ENCODE measurements at regions of chr14 and their contacts with region 1.

Region 1: DNA sequence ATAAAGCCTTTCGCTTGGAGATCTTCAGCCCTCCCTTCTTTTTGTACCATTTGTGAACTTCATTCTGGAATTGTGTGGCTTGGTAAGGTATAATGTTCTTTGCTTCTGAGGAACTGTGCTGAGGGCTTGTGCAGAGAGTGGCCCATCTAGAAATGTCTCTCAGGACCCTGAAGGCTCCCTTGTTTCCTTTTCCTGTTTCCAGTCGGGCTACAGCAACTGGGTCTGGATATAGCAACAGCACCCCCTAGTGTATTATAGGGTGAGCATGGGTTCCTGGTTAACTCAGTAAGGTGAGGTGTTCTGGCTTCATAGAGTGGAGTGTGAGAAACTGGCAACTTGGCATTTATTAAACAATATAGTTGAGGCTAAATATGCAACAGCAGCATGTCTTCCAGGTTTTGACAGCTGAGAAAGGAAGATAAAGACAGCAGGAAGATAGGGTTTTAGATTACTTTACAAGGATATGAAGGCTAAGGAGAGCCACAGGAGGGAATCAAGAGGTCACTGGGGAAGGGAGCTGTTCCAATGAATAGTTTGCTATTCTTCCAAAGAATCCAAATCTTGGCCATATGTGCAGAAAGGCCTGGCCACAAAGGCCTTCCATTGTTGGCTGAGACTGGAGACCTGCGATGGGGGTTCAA is 49.1 kb upstream of the RNU6-8 start:
- DNase-seq: peak in 1 of 2 donors; percentile 69
- ATAC-seq: peak; percentile 72 to 90 (median 83)
- H3K4me3 ChIP-seq: no peak overlapping the region
- H3K27ac ChIP-seq: peak overlapping the region in 5 of 10 donors; percentile 8 to 44 (median 23)
- H3K4me1 ChIP-seq: peaks cover 0 to 37% (median 9%) of the 10 kb centered on the region in 9 donors
- H3K27me3 ChIP-seq: no peaks in the 10 kb centered on the region
- CTCF ChIP-seq: peak; percentile 61 to 93 (median 83)

Region 2: GRCh38 chr14:31510222-31510621 is 741.9 kb before region 1 on chr14:
- intact Hi-C with region 1: loop called in 9 of 10 experiments (anchors 2 to 5 kb)
- DNase-seq: no peak
- ATAC-seq: no peak
- H3K4me3 ChIP-seq: no peak overlapping the region
- H3K27ac ChIP-seq: no peak overlapping the region
- H3K4me1 ChIP-seq: peaks cover 4 to 16% (median 11%) of the 10 kb centered on the region in 9 donors
- H3K27me3 ChIP-seq: no peaks in the 10 kb centered on the region
- CTCF ChIP-seq: peak; percentile 48 to 85 (median 71)

Region 3: DNA sequence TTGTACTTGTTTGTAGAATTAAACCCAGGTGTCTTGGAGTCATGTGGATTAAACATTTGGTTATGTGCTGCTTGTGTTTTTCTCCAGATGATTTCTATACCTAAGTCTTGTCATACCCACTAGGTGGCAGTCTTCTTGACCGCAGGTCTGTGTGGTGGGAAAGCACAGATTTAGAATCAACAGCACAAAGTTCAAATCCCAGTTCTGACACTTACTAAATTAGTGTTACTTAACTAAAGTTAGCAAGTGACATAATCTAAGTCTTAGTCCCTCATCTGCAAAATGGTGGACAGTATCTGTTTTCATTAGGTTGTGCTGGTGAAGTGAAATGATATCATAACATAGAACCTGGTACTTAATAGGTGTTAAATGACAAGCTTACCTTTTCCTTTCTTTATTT is 326.0 kb before region 1 on chr14:
- intact Hi-C with region 1: loop called in 4 of 10 experiments (anchors 5 to 10 kb)
- DNase-seq: no peak
- ATAC-seq: no peak
- H3K4me3 ChIP-seq: no peak overlapping the region
- H3K27ac ChIP-seq: peak overlapping the region; percentile 70 to 92 (median 84)
- H3K4me1 ChIP-seq: peaks cover 5 to 49% (median 36%) of the 10 kb centered on the region in 9 donors
- H3K27me3 ChIP-seq: no peaks in the 10 kb centered on the region
- CTCF ChIP-seq: peak in 8 of 9 donors; percentile 32 to 63 (median 48)

Region 4: DNA sequence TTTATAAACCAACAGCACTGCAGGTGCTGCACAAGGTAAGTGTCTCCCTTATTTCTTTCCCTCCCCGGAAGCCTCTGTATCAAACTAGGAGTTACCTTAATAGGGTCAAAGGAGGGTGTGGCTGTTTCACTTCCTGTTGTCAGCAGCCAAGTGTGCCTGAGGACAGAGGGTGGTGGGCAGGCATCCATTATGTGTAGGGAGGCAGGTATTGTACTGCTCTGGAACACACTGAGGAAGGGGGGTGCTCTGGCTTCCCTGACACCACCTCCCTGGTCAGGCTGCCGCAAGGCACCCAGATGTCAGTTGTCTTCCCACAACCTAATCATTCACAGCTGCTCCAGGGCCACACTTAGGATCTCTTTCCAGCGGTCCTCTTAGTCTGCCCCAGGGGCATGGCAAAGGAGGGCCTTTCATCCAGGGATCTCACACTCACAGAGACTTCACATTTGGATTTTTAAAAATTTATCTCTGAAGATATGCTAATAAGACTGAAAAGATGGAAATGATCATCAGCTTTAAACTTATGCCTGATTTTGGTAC is 307.0 kb before region 1 on chr14:
- intact Hi-C with region 1: loop called in 1 of 10 experiments (anchors 5 kb)
- DNase-seq: no peak
- ATAC-seq: peak in 6 of 8 donors; percentile 19 to 33 (median 26)
- H3K4me3 ChIP-seq: no peak overlapping the region
- H3K27ac ChIP-seq: no peak overlapping the region
- H3K4me1 ChIP-seq: peaks cover 0 to 33% (median 6%) of the 10 kb centered on the region in 9 donors
- H3K27me3 ChIP-seq: no peaks in the 10 kb centered on the region
- CTCF ChIP-seq: no peak

Region 5: GRCh38 chr14:32469388-32470160 is 217.4 kb after region 1 on chr14:
- intact Hi-C with region 1: loop called in 7 of 10 experiments (anchors 5 to 10 kb)
- DNase-seq: no peak
- ATAC-seq: peak in 3 of 8 donors; percentile 29 to 56 (median 52)
- H3K4me3 ChIP-seq: no peak overlapping the region
- H3K27ac ChIP-seq: peak overlapping the region in 8 of 10 donors; percentile 2 to 87 (median 66)
- H3K4me1 ChIP-seq: peaks cover 6 to 64% (median 38%) of the 10 kb centered on the region in 9 donors
- H3K27me3 ChIP-seq: no peaks in the 10 kb centered on the region
- CTCF ChIP-seq: peak in 8 of 9 donors; percentile 27 to 71 (median 63)

Measured in heart right ventricle (tissue), 16 donors.